SK-N-SH (cell line): ENCODE measurements at regions of chr11 and their contacts with region 1.

Region 1: GRCh38 chr11:727859-728748 is 19.2 kb upstream of the TALDO1 start:
- DNase-seq: peak; percentile 97
- H3K4me3 ChIP-seq: peak overlapping the region in 1 of 2 experiments; percentile 48; a peak in 1 of 4 replicates
- H3K27ac ChIP-seq: no peak overlapping the region
- H3K4me1 ChIP-seq: peaks cover 0 to 10% of the 10 kb centered on the region in 2 experiments; a peak in 1 of 4 replicates
- H3K27me3 ChIP-seq: peaks cover 11% of the 10 kb centered on the region; the same call in 1 of the 2 replicates
- CTCF ChIP-seq: peak; percentile 94
- EP300 ChIP-seq: no peak
- RAD21 ChIP-seq: peak; percentile 75

Region 2: DNA sequence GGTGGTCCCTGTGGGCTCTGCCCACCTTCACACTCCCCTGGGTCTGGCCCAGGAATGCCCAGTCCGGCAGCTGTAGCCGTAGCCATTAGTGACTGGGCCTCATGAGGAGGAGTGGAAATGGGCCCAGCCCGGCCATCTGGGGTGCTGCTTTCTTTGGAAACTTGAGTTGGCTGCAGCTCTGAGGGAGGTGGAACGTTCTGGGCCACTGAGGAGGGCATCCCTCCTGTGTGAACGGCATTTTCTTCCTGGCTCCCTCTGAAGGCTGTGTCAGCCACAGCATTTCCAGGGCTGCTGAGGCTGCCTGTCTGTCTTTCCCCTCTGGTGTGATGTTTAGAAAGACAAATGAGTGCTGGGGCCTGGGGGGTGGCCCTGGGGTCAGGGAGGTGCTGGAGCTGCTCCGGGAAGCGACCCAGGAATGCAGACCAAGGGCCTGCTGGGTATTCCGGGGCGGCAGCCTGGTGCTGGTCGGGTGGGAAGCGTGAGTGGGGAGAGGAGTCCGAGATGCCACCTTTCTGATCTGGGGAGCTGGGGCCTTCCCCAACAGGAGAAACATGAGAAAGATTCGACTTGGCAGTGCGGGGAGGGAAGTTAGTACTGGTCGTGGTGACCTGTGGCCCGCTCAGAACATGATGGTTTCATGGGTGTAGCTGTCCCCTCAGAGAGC is 250.9 kb before region 1 on chr11:
- CTCF ChIA-PET with region 1: no interaction called
- POLR2A ChIA-PET with region 1: no interaction called
- DNase-seq: peak; percentile 16
- H3K4me3 ChIP-seq: no peak overlapping the region
- H3K27ac ChIP-seq: no peak overlapping the region
- H3K4me1 ChIP-seq: no peaks in the 10 kb centered on the region; a peak in 1 of 4 replicates
- H3K27me3 ChIP-seq: no peaks in the 10 kb centered on the region
- CTCF ChIP-seq: no peak
- EP300 ChIP-seq: no peak
- RAD21 ChIP-seq: no peak

Region 3: DNA sequence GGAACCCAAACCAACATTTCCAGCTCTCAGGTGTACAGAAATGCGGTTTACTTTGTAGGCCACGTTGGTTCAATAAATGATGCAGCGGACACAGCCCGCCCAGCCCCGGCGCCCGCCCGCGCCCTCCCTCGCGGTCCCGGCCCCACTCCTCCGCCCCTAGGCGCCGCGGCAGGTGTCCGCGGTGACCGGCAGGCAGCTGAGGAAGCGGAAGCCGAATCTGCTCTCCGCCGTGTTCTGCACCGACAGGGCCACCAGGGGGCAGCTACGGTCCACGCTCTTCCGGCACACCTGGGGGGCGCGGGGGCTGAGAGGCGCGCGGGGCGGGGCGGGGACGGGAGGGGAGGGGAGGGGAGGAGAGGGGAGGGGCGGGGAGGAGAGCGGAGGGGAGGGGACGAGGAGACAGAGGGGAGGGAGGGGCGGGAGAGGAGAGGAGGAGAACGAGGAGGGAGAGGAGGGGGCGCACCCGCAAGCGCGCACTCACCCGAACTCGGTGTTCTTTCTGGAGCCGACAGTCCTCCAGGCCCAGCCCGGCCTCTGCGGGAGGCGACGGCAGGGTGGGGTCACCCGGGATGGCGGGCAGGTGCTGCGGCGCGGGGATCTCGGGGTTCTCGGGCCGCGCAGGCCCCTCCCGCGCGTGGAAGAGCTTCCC is 173.2 kb before region 1 on chr11:
- CTCF ChIA-PET with region 1: interaction called, 24 read pairs
- POLR2A ChIA-PET with region 1: no interaction called
- DNase-seq: peak; percentile 92
- H3K4me3 ChIP-seq: peak overlapping the region in 1 of 2 experiments; percentile 53; a peak in 3 of 4 replicates
- H3K27ac ChIP-seq: no peak overlapping the region; a peak in 1 of 4 replicates
- H3K4me1 ChIP-seq: peaks cover under 1 to 22% of the 10 kb centered on the region in 2 experiments; a peak in 1 of 4 replicates
- H3K27me3 ChIP-seq: peaks cover 11% of the 10 kb centered on the region
- CTCF ChIP-seq: peak; percentile 43
- EP300 ChIP-seq: no peak
- RAD21 ChIP-seq: peak; percentile 63

Region 4: DNA sequence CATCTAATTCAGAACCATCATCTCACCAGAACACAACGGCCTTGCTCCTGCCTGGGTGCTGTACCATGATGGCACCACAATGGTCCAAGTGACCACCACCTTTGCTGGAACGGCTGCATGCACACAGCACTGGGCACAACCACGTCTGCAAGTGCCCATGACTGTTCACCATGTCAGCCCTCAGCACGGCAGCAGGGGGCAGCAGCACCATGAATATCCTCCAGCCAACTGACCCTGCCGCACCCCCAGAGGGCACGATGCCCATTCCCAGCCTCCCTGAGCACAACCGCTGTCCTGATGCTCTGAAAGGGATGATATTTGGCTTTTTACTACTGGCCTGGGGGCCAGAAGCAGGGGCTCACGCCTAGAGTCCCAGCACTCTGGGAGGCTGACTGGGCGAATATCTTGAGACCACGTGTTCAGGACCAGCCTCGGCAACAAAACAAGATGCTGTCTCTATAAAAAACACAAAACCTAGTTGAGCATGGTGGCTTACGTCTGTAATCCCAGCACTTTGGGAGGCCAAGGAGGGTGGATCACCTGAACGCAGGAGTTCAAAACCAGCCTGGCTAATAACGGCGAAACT is 65.3 kb before region 1 on chr11:
- CTCF ChIA-PET with region 1: interaction called, 150 read pairs
- POLR2A ChIA-PET with region 1: no interaction called
- DNase-seq: peak; percentile 92
- H3K4me3 ChIP-seq: no peak overlapping the region; a peak in 1 of 4 replicates
- H3K27ac ChIP-seq: no peak overlapping the region
- H3K4me1 ChIP-seq: no peaks in the 10 kb centered on the region
- H3K27me3 ChIP-seq: no peaks in the 10 kb centered on the region
- CTCF ChIP-seq: peak; percentile 75
- EP300 ChIP-seq: no peak
- RAD21 ChIP-seq: peak; percentile 73

Region 5: GRCh38 chr11:695538-696248 is 32.4 kb before region 1 on chr11 and contains the start of gene TMEM80:
- CTCF ChIA-PET with region 1: interaction called, 122 read pairs
- POLR2A ChIA-PET with region 1: interaction called, 3 read pairs
- DNase-seq: peak; percentile 92
- H3K4me3 ChIP-seq: peak within 1 kb of the TSS; percentile 89 to 97
- H3K27ac ChIP-seq: peak within 1 kb of the TSS; percentile 89 to 98
- H3K4me1 ChIP-seq: peaks cover 13 to 19% of the 10 kb centered on the region in 2 experiments; a peak in 2 of 4 replicates
- H3K27me3 ChIP-seq: no peaks in the 10 kb centered on the region
- CTCF ChIP-seq: no peak
- EP300 ChIP-seq: no peak
- RAD21 ChIP-seq: no peak
- polyA plus RNA-seq, gene TMEM80: 40.4 and 51.0 TPM in 2 replicates

Region 6: GRCh38 chr11:705646-706438 is 22.3 kb before region 1 on chr11 and contains the start of gene EPS8L2:
- CTCF ChIA-PET with region 1: interaction called, 22 read pairs
- POLR2A ChIA-PET with region 1: interaction called, 3 read pairs
- DNase-seq: peak; percentile 45
- H3K4me3 ChIP-seq: no peak within 1 kb of the TSS
- H3K27ac ChIP-seq: no peak within 1 kb of the TSS
- H3K4me1 ChIP-seq: peaks cover 0 to 2% of the 10 kb centered on the region in 2 experiments; a peak in 1 of 4 replicates
- H3K27me3 ChIP-seq: no peaks in the 10 kb centered on the region
- CTCF ChIP-seq: no peak
- EP300 ChIP-seq: no peak
- RAD21 ChIP-seq: no peak
- polyA plus RNA-seq, gene EPS8L2: 0.67 and 0.74 TPM in 2 replicates

Region 7: GRCh38 chr11:747158-748006 is 19.3 kb after region 1 on chr11 and contains the start of gene TALDO1:
- CTCF ChIA-PET with region 1: interaction called, 94 read pairs
- POLR2A ChIA-PET with region 1: no interaction called
- DNase-seq: peak; percentile 99
- H3K4me3 ChIP-seq: peak within 1 kb of the TSS; percentile 86 to 90
- H3K27ac ChIP-seq: peak within 1 kb of the TSS; percentile 15 to 77; a peak in 2 of 4 replicates
- H3K4me1 ChIP-seq: peaks cover 0 to 16% of the 10 kb centered on the region in 2 experiments; a peak in 3 of 4 replicates
- H3K27me3 ChIP-seq: no peaks in the 10 kb centered on the region
- CTCF ChIP-seq: no peak; the same call in 1 of the 2 replicates
- EP300 ChIP-seq: no peak
- RAD21 ChIP-seq: no peak
- polyA plus RNA-seq, gene TALDO1: 78.4 and 103 TPM in 2 replicates

Region 8: GRCh38 chr11:765025-765801 is 37.1 kb after region 1 on chr11:
- CTCF ChIA-PET with region 1: interaction called, 24 read pairs
- POLR2A ChIA-PET with region 1: no interaction called
- DNase-seq: peak; percentile 92
- H3K4me3 ChIP-seq: no peak overlapping the region
- H3K27ac ChIP-seq: no peak overlapping the region
- H3K4me1 ChIP-seq: peaks cover 5 to 9% of the 10 kb centered on the region in 2 experiments; a peak in 2 of 4 replicates
- H3K27me3 ChIP-seq: no peaks in the 10 kb centered on the region
- CTCF ChIP-seq: peak; percentile 65
- EP300 ChIP-seq: no peak
- RAD21 ChIP-seq: peak; percentile 67

Region 9: DNA sequence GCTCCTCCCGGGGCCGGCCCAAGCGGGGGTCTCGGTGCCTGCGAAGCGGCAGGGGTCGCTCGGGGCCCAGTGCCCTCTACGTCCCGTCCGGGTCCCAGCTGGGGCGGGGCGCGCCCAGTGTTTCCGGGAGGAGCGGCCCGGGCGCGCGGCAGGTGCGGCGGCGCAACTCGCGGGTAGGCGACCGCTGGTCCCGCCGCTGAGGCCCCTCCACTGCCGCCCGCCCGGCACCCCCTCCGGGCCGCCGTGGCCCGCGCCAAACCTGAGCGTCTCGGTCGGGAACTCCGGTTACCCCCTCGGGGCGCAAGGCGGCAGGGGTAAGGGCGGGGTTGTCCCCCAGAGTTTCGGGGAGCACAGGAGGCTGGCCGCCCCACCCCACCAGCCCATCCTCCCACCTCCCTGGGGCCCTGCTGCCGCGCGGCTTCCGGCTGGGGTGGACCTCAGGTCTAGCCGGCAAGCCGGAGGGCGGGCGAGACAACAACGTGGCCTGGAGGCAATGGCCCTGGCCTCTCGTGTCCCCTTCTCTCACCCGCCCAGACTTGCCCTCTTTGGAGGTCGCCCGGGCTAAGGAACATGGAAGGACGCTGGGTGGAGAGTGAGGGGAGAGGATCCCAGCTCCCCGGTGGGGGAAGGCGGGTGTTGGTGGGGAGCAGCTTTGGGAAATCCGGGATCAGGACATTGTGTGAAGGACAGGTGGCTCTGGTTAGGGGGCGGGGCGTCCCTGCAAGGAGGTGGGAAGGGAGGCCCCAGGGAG is 99.2 kb after region 1 on chr11:
- CTCF ChIA-PET with region 1: no interaction called
- POLR2A ChIA-PET with region 1: no interaction called
- DNase-seq: peak; percentile 56
- H3K4me3 ChIP-seq: peak overlapping the region in 1 of 2 experiments; percentile 25; a peak in 1 of 4 replicates
- H3K27ac ChIP-seq: no peak overlapping the region
- H3K4me1 ChIP-seq: peaks cover 11 to 21% of the 10 kb centered on the region in 2 experiments; a peak in 2 of 4 replicates
- H3K27me3 ChIP-seq: no peaks in the 10 kb centered on the region
- CTCF ChIP-seq: no peak
- EP300 ChIP-seq: no peak
- RAD21 ChIP-seq: no peak

Region 10: DNA sequence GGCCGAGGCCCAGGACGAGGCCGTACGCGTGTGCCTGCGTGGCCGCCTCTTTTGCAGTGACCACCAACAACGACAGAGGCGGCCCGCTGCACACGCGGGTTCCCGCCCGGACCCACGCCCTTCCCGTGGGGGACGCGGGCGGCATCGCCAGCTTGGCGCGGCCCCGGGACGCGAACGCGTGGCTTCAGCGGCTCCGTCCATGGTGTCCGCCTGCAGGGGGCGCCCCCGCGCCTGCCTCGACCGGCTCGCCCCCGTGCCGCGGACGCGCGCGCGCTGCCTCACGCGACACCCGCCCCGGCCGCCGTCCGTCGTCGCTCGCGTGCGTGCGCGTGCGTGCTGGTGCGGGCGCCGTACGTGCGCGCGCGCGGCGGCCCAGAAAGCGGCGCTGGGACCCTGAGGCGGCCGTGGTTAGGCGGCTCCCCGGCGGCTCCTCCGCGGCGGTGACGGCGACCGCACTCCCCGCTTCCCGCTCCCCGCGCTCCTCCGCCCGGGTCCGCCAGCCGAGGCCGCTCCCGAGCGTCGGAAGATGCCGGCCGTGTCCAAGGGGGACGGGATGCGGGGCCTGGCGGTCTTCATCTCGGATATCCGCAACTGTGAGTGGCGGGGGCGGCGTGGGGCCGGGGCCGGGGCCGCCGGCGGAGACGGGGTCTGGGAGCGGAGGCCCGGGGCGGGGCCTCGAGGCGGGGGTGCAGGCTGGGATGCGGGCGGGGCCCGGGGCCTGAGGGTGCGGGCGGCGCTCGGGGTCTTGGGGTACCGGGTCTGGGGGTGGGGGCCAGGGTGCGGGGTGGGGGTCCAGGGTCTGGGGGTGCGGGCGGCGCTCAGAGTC is 197.6 kb after region 1 on chr11 and contains the start of gene AP2A2:
- CTCF ChIA-PET with region 1: no interaction called
- POLR2A ChIA-PET with region 1: no interaction called
- DNase-seq: peak; percentile 99
- H3K4me3 ChIP-seq: peak within 1 kb of the TSS; percentile 69 to 82
- H3K27ac ChIP-seq: peak within 1 kb of the TSS; percentile 64 to 92; a peak in 3 of 4 replicates
- H3K4me1 ChIP-seq: peaks cover 0 to 31% of the 10 kb centered on the region in 2 experiments; a peak in 1 of 4 replicates
- H3K27me3 ChIP-seq: no peaks in the 10 kb centered on the region
- CTCF ChIP-seq: peak; percentile 60
- EP300 ChIP-seq: no peak
- RAD21 ChIP-seq: peak; percentile 25; the same call in 1 of the 2 replicates
- polyA plus RNA-seq, gene AP2A2: 36.3 and 42.7 TPM in 2 replicates